CD14-positive monocyte (primary cell): ENCODE measurements at regions of chr3 and their contacts with region 1.

Region 1: DNA sequence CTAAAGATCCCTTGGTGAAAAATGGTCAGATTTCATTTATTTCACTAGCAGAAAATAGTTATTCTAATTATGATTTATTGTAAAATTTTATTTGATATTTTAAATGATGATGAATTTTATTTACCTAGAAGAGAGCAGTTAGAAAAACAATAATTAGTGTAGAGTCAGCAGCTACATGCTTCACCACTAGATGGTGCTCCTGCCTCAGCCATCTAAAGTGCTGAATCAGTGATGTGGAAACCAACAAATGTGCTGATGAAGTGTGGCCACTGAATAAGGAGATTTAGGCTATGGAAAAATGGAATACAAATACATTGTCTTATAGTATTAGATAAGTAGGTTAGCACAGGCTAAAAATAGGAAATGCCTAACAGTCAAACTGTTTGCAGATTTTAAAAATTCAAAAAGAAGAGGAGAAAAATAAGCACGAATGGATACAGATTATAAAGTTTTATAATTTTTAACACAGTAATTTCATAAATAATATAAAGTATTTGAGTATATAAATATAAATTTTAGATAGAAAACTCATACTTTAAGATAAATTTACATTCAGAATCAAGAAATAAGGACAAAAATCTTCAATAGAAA is 109.8 kb downstream of the PPP2R3A start:
- DNase-seq: peak; percentile 71 to 83 (median 80)
- H3K4me3 ChIP-seq: peak overlapping the region in 1 of 3 experiments; percentile 16
- H3K4me3 Mint-ChIP-seq: peak overlapping the region in 1 of 2 donors; percentile 78
- H3K27ac ChIP-seq: peak overlapping the region in 1 of 2 donors; percentile 51
- H3K27ac Mint-ChIP-seq: peak overlapping the region in 4 of 7 donors; percentile 24 to 91 (median 79)
- H3K4me1 ChIP-seq: peaks cover 7 to 10% of the 10 kb centered on the region in 2 donors
- H3K4me1 Mint-ChIP-seq: peaks cover 15% of the 10 kb centered on the region
- H3K27me3 ChIP-seq: no peaks in the 10 kb centered on the region
- H3K27me3 Mint-ChIP-seq: peaks cover 0 to 6% (median 2%) of the 10 kb centered on the region in 3 donors
- CTCF ChIP-seq: peak; percentile 98

Region 2: DNA sequence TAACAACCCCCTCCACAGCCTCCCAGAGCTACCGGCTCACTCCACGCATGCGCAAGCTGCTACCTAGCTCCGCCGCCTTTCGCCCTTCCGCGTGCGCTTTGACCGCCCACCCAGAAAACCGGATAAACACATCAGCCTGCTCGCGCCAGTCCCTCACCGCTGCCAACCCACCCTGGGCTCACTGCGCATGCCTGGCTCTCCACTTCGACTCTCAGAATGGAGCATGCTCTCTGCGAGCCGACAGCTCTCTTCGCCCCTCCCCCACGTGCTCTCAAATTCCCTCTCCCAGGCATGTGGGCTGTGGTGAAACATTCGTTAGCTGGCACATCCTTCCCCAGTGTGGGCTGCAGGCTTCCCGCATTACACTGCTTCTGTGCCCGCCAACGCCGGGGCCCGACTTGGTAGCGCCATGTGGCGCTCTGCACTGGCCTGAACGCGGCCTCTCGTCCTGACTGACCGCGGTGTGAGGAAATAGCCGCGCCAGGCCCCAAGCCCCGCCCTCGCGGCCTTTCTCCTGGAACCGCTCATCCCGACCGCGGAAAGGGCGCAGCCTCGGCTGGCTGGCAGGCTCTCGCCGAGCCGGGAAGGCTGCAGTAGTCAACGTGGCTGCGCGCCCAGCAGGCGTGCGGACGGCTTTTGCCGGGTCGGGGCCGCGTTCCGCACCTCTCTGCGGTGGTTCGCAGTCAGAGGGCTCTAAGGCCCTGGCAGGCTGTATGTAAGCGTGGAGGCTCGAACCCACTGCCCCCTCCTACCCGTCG is 121.3 kb after region 1 on chr3:
- intact Hi-C with region 1: loop called in 1 of 2 experiments (anchors 5 kb)
- DNase-seq: peak; percentile 97 to 98 (median 97)
- H3K4me3 ChIP-seq: peak overlapping the region; percentile 92 to 99 (median 94)
- H3K4me3 Mint-ChIP-seq: peak overlapping the region; percentile 94 to 98
- H3K27ac ChIP-seq: peak overlapping the region; percentile 91 to 94
- H3K27ac Mint-ChIP-seq: peak overlapping the region; percentile 94 to 98 (median 97)
- H3K4me1 ChIP-seq: peaks cover 29 to 43% of the 10 kb centered on the region in 2 donors
- H3K4me1 Mint-ChIP-seq: peaks cover 38% of the 10 kb centered on the region
- H3K27me3 ChIP-seq: no peaks in the 10 kb centered on the region
- H3K27me3 Mint-ChIP-seq: peaks cover 0 to 2% (median 2%) of the 10 kb centered on the region in 3 donors
- CTCF ChIP-seq: no peak

Region 3: DNA sequence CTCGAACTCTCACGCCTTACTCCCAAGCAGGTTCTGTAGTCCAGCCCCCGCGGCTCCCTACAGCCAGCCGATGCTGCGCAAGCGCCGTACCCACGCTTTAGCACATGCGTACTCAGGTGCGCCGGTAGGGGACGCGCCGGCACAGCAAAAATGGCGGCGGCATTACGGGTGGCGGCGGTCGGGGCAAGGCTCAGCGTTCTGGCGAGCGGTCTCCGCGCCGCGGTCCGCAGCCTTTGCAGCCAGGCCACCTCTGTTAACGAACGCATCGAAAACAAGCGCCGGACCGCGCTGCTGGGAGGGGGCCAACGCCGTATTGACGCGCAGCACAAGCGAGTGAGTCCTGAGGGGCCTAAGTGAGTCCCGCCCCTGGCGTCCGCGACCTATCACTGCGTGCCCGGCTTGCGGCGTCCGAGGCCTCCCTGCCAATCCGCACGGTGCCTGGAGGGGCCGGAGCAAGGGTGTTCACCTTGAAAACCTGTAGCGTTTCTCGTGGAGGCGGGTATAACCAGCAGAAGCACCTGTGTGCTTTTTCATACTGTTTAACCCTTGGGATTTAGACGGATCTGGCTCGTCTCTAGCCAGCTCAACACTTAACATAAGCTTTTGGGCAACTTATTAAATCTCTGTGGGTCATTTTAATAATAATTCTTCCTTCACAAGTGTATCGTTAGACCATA is 175.1 kb after region 1 on chr3 and contains the start of gene PCCB:
- intact Hi-C with region 1: loop called in 1 of 2 experiments (anchors 5 kb)
- DNase-seq: peak; percentile 87 to 92 (median 89)
- H3K4me3 ChIP-seq: peak within 1 kb of the TSS; percentile 58 to 83 (median 69)
- H3K4me3 Mint-ChIP-seq: peak within 1 kb of the TSS; percentile 86 to 91
- H3K27ac ChIP-seq: peak within 1 kb of the TSS; percentile 76 to 79
- H3K27ac Mint-ChIP-seq: peak within 1 kb of the TSS; percentile 79 to 95 (median 92)
- H3K4me1 ChIP-seq: peaks cover 16% of the 10 kb centered on the region in 2 donors
- H3K4me1 Mint-ChIP-seq: peaks cover 22% of the 10 kb centered on the region
- H3K27me3 ChIP-seq: no peaks in the 10 kb centered on the region
- H3K27me3 Mint-ChIP-seq: peaks cover under 1 to 3% (median 1%) of the 10 kb centered on the region in 3 donors
- CTCF ChIP-seq: peak; percentile 87
- polyA plus RNA-seq, gene PCCB: 13.1 to 41.7 (median 31.6) TPM

Region 4: GRCh38 chr3:136385457-136385856 is 310.1 kb after region 1 on chr3:
- intact Hi-C with region 1: loop called in 1 of 2 experiments (anchors 10 kb)
- DNase-seq: no peak
- H3K4me3 ChIP-seq: no peak overlapping the region
- H3K4me3 Mint-ChIP-seq: no peak overlapping the region
- H3K27ac ChIP-seq: no peak overlapping the region
- H3K27ac Mint-ChIP-seq: no peak overlapping the region
- H3K4me1 ChIP-seq: no peaks in the 10 kb centered on the region
- H3K4me1 Mint-ChIP-seq: no peaks in the 10 kb centered on the region
- H3K27me3 ChIP-seq: no peaks in the 10 kb centered on the region
- H3K27me3 Mint-ChIP-seq: no peaks in the 10 kb centered on the region
- CTCF ChIP-seq: no peak

Region 5: DNA sequence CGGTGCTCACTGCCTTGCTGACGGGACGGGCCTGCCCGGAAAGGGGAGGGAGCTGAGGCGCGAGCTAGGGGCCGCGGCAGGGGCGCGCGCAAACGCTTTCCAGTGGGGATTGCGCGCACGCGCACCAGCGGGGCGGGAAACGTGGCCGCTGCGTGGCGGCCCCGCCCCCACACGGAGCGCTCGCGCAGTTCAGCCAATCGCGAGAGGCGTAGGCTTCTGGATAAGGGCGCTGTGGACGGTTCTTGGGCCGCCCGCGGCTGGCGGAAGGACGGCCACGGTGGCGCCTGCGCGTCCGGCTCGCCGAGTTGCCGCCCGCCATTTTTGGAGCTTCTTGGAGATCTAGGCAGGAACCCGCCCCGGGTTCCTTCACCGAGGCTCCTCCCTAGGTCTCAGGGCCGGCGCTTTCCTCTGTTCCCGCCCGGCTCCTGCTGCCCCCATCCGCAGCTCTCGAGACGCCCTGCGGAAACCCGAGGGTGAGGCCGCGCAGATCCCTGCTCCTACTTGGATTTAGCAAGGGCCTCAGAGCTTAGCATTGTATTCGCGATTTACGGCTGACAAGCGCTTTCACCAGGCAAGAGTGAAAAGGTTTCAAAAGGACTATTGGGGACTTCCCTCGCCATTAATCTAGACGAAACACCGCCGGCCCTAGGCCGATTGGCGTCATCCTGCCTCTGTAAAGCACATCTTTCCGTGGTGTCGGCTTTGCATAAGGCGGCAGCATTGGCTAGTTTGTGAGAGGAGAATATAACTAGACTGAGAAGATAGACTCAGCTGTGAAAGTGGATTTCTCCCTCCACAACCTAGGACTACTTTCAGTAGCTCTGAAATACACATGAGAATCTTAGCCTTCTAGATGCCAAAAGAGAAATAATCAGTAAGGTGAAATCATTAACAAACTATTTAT is 677.4 kb after region 1 on chr3:
- intact Hi-C with region 1: loop called in 1 of 2 experiments (anchors 10 kb)
- DNase-seq: peak; percentile 98 to 99 (median 99)
- H3K4me3 ChIP-seq: peak overlapping the region; percentile 81 to 97 (median 92)
- H3K4me3 Mint-ChIP-seq: peak overlapping the region; percentile 87 to 95
- H3K27ac ChIP-seq: peak overlapping the region; percentile 97 to 98
- H3K27ac Mint-ChIP-seq: peak overlapping the region; percentile 92 to 99 (median 98)
- H3K4me1 ChIP-seq: peaks cover 31 to 42% of the 10 kb centered on the region in 2 donors
- H3K4me1 Mint-ChIP-seq: peaks cover 40% of the 10 kb centered on the region
- H3K27me3 ChIP-seq: no peaks in the 10 kb centered on the region
- H3K27me3 Mint-ChIP-seq: no peaks in the 10 kb centered on the region
- CTCF ChIP-seq: peak; percentile 11

Region 6: DNA sequence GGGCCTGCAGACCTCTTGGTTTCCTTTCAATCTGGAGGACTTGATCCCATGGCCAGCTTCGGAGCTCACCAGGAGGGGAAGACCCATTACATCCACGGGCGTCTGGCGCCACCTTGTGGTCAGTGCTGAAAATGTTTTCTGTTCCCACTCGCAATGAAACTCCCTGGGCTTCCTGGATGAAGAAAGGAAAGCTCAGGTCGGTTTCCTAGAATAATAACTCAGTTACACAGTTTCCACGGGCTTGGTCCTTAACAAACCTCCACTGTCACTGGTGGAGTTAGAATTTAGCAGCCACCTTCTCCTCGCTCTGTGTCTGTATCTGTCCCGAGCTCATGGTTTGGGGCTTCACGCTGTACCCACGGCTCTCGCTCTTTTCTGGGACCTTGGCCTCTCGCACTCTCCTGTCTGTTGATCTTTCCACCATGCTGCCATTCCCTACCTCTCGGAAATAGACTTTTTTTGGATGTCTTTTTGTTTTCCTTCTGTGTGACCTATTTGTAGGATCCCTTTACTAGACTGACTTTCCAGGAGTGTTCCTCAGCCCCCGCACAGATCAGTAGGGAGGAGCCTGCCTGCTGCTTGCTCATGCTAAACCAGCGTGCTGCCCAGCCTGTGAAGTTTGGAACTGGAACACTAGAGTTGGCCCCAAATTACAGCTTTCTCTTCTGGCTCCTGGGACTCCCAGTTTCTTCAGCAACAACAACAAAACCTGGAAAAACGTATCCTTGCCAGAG is 938.8 kb after region 1 on chr3:
- intact Hi-C with region 1: loop called (anchors 2 kb)
- DNase-seq: peak; percentile 74 to 80 (median 78)
- H3K4me3 ChIP-seq: peak overlapping the region; percentile 42 to 73 (median 72)
- H3K4me3 Mint-ChIP-seq: peak overlapping the region; percentile 81 to 96
- H3K27ac ChIP-seq: no peak overlapping the region
- H3K27ac Mint-ChIP-seq: peak overlapping the region in 4 of 7 donors; percentile 0 to 76 (median 63)
- H3K4me1 ChIP-seq: peaks cover 0 to 11% of the 10 kb centered on the region in 2 donors
- H3K4me1 Mint-ChIP-seq: peaks cover 12% of the 10 kb centered on the region
- H3K27me3 ChIP-seq: no peaks in the 10 kb centered on the region
- H3K27me3 Mint-ChIP-seq: no peaks in the 10 kb centered on the region
- CTCF ChIP-seq: peak; percentile 91

Region 7: DNA sequence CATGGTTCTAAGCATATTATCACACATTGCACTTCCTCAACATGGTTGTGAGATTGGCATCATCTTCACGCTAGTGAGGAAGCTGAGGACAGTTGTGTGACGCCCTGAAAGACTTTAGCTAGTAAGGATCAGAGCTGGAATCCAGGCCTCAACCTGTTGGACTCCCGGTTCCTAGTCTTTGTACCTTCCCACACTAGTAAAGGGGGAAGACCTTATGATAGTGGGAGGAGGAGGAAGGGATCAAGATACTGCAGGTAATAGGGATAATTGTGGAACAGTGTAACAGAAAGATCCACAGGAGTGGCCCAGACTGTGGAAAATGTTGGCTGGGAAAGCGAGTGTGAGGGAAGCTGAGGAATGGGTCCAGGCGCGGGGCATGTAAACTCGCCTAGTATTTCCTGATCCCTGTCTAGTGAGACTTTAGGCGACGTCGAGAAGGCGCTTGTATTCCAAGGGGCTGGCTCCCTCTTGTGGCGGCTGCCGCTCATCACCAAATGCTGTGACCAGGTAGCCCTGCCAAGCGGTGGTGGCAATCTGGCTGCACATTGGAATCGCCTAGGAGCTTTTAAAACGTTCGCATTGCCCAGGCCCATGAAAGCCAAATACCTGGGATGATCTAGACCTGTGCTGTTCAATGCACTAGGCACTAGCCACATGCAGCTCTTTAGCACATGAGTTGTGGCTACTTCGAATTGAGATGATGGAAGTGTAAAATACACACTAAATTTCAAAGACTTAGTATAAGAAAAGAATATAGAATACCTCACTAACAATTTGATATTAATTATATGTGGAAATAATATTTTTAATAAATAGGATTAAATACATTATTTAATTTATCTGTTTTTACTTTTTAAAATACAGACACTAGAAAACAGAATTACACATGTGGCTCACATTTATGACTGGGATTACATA is 1895.9 kb after region 1 on chr3:
- intact Hi-C with region 1: loop called in 1 of 2 experiments (anchors 10 kb)
- DNase-seq: peak; percentile 4 to 20 (median 16)
- H3K4me3 ChIP-seq: no peak overlapping the region
- H3K4me3 Mint-ChIP-seq: peak overlapping the region in 1 of 2 donors; percentile 28
- H3K27ac ChIP-seq: no peak overlapping the region
- H3K27ac Mint-ChIP-seq: no peak overlapping the region
- H3K4me1 ChIP-seq: no peaks in the 10 kb centered on the region
- H3K4me1 Mint-ChIP-seq: peaks cover 3% of the 10 kb centered on the region
- H3K27me3 ChIP-seq: peaks cover 0 to 4% of the 10 kb centered on the region in 2 donors
- H3K27me3 Mint-ChIP-seq: peaks cover 2 to 4% (median 3%) of the 10 kb centered on the region in 3 donors
- CTCF ChIP-seq: peak; percentile 75